HEK293 (cell line): ENCODE measurements at regions of chrX and their contacts with region 1.

Region 1: DNA sequence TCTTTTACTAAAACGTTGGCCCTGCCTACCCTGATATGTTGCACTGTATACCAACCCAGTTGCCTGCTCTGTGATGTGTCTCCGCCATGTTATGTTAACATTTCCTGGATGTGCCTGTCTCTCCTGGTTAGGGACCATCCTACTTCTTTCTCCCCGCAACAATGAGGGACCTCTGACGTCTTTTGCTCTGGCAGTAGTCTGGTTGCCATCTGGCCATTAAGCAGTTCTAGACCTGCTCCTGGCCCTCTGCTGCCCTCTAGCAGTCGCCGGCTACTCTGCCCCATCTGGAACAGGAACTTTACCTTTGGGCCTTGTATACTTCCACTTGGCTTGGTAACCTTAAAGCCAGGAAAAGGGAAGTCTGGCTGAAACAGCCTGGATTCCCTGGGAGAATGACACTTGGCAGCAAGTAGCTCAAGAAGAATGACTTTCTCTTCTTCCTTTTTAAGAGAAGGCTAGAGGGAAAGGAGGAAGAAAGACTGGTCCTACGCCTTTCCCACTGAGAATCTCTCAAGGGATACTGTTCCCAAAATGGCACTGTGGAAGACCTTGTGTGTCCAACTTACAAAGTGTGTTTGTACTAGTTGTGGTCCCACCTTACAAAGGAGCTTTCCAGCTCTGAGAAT is 63.5 kb downstream of the GPC3 start:
- H3K4me3 ChIP-seq: no peak overlapping the region
- H3K27ac ChIP-seq: no peak overlapping the region; the same call in 1 of the 2 replicates
- H3K4me1 ChIP-seq: no peaks in the 10 kb centered on the region; the same call in none of the 2 replicates
- CTCF ChIP-seq: peak; percentile 87

Region 2: DNA sequence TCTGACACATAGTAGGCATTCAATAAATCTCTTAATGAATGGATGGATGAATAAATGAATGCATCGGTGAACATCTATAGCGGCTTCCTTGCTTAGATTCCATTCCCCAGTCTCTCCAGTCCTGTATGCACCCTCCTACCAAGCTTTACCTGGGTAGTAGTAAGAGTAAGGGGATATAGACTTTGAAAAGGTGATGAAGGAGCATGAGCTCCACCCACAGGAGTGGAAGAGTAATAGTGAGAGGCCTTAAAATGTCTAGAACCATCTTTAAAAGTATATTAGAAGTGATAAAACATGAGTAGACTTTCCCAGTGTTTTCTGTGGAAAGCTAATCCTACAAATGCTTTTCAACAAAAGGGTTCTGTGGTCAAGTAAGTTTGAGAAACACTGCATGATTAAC is 99.0 kb after region 1 on chrX:
- CTCF ChIA-PET with region 1: interaction called, 33 read pairs
- POLR2A ChIA-PET with region 1: no interaction called
- H3K4me3 ChIP-seq: no peak overlapping the region
- H3K27ac ChIP-seq: no peak overlapping the region
- H3K4me1 ChIP-seq: no peaks in the 10 kb centered on the region
- CTCF ChIP-seq: peak; percentile 17; the same call in 1 of the 2 replicates